Posterior vena cava (tissue), 2 donors: ENCODE measurements at regions of chr2 and their contacts with region 1.

Region 1: DNA sequence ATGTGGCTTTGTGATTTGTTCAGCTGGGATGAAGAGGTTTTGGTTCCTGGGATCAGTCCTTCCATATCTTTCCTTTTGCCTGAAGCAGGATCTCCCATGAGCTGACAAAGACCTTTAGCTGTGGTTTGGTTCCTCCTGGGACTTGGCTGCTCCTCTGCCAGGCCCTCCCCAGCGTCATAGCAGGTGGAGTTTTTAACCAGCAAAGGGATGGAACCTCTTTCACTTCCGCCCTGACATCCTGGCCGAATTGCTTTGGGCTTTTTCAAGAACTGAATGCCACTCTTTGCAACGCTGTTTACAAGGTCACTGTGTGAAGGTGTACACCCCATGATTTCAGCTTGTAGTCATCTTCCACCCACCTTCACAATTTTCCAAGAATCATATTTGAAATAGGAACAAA is 390 bp downstream of the PCARE start:
- DNase-seq: no peak

Region 2: DNA sequence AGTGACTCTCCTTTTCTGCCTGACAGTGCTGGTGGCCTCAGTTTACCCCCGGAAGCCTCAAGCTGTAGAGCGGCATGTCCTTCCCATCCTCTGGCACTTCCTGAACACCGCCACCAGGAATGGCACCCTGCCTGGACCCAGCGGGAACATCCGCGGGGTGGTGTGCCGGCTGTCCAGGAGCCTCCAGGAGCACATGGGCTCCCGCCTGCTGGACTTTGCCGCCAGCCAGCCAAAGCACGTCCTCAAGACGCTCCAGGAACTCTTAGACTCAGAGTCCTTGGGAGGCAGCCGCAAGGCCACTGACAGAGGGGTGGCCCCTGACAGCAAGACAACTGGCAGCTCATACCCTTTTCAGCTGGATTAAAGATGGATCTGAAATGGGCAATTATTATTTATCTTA is 22.2 kb before region 1 on chr2:
- intact Hi-C with region 1: loop called in 1 of 2 experiments (anchors 1 kb)
- DNase-seq: no peak

Region 3: DNA sequence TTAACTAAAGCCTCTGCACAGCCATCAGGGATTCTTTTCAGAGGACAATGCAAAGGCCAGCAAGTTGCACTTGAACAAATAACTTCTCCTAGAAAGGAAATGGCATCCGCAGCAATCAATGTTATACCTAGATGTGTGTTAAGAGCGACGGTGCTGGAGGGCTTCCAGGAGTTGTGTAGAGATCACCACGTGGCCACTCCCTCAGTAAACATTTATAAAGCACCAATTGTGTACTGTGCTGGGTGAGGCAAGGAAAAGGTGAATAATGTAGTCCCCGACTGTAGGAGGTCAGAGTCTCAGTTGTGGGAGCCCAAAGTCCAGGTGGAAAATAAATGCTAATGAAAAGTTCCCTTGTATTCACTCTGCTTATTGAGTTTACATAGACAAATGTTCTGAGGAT is 712.4 kb after region 1 on chr2:
- intact Hi-C with region 1: no loop called
- DNase-seq: no peak